T-cell (primary cell): ENCODE measurements at regions of chr5 and their contacts with region 1.

Region 1: GRCh38 chr5:59351076-59351794 is 542.3 kb downstream of the PDE4D start:
- DNase-seq: no peak
- ATAC-seq: no peak
- H3K4me3 ChIP-seq: no peak overlapping the region
- H3K4me3 Mint-ChIP-seq: no peak overlapping the region
- H3K27ac ChIP-seq: no peak overlapping the region
- H3K27ac Mint-ChIP-seq: no peak overlapping the region
- H3K4me1 ChIP-seq: no peaks in the 10 kb centered on the region
- H3K4me1 Mint-ChIP-seq: no peaks in the 10 kb centered on the region
- H3K27me3 ChIP-seq: no peaks in the 10 kb centered on the region
- H3K27me3 Mint-ChIP-seq: peaks cover 4 to 17% of the 10 kb centered on the region in 2 donors

Region 2: DNA sequence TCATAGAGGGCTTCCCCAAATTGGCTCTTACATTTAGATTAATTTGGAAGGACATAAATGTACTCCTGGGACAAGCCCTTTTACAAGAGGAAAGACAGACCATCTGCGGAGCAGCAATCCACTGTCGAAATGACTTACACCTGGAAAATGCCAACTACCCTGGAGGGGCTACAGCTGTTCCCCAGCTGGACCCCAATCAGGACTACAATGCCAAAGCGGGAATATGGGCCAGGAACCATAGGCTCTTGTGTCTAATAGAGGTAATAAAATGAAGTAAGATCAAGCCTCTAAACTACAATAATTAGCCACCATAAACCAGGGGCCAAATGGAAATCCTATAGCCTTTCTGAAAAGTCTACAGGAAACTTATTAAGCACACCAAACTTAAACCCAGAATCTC is 39.0 kb before region 1 on chr5:
- CTCF ChIA-PET with region 1: no interaction called
- POLR2A ChIA-PET with region 1: no interaction called
- DNase-seq: no peak
- ATAC-seq: no peak
- H3K4me3 ChIP-seq: no peak overlapping the region
- H3K4me3 Mint-ChIP-seq: no peak overlapping the region
- H3K27ac ChIP-seq: no peak overlapping the region
- H3K27ac Mint-ChIP-seq: no peak overlapping the region
- H3K4me1 ChIP-seq: no peaks in the 10 kb centered on the region
- H3K4me1 Mint-ChIP-seq: no peaks in the 10 kb centered on the region
- H3K27me3 ChIP-seq: no peaks in the 10 kb centered on the region
- H3K27me3 Mint-ChIP-seq: peaks cover 18 to 20% of the 10 kb centered on the region in 2 donors

Region 3: DNA sequence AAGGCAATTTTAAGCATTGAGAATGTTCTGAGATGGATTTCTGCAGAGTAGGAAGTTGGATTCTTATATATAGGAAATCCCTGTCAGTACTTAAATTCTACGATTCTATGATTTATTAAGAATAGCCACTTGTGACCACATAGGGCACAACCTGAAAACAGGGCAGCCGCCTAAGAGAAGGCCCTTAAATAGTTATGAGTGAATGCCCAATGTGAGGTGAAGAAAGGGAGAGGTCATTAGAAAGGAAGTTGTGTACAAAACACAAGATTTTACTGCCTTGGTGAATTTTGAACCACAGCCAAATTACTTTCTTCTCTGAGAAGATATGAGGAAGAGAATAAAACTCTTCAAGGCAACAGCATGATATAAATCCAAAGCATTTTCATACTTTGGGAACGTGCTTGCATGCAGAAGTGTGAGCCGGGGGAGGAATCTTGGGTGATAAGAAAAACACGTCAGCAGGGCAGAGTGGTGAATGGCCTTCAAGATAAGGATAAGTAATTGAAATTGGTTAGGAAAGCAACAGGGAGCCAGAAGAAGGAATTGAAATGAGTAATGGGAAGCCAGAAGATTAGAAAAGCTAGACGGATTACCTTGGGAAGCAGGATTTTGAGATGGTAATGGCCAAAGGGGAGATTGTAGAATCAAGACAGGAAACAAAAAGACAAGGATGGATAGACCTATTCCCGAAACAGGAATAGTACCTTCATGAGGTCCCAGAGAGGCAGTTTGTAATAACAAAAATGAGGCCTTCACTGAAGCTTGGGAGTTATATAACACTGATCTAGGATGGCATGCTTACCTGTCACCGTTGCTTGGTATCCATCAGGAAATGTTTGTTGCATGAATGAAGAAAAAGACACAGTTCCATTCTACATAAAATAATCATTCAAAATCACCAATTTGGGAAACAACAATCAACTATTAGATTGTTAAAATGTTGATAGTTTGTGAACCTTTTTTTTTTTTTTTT is 298.0 kb after region 1 on chr5:
- CTCF ChIA-PET with region 1: no interaction called
- POLR2A ChIA-PET with region 1: no interaction called
- DNase-seq: no peak
- ATAC-seq: no peak
- H3K4me3 ChIP-seq: no peak overlapping the region
- H3K4me3 Mint-ChIP-seq: no peak overlapping the region
- H3K27ac ChIP-seq: no peak overlapping the region
- H3K27ac Mint-ChIP-seq: no peak overlapping the region
- H3K4me1 ChIP-seq: no peaks in the 10 kb centered on the region
- H3K4me1 Mint-ChIP-seq: peaks cover 0 to 3% (median 3%) of the 10 kb centered on the region in 3 donors
- H3K27me3 ChIP-seq: no peaks in the 10 kb centered on the region
- H3K27me3 Mint-ChIP-seq: no peaks in the 10 kb centered on the region

Region 4: DNA sequence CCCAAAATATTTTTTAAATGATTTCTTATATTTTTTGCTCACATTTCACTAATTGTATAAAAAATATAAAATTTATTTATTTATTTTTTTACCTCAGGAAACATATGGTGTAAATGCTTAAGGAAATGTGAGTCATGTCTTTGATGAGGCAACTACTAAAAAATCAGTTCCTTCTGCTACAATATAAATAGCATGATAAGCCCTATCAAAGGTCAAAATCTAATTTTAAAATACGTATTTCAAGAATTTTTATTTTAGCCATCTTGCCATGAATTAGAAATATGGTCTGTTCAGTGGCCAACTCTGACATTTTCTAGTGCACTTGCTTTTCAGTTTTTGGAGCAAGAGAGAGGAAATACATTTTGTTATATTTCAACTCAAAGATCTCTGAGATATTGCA is 491.8 kb after region 1 on chr5:
- CTCF ChIA-PET with region 1: interaction called in 1 of 2 experiments, 10 read pairs
- POLR2A ChIA-PET with region 1: no interaction called
- DNase-seq: no peak
- ATAC-seq: no peak
- H3K4me3 ChIP-seq: no peak overlapping the region
- H3K4me3 Mint-ChIP-seq: no peak overlapping the region
- H3K27ac ChIP-seq: no peak overlapping the region
- H3K27ac Mint-ChIP-seq: no peak overlapping the region
- H3K4me1 ChIP-seq: no peaks in the 10 kb centered on the region
- H3K4me1 Mint-ChIP-seq: no peaks in the 10 kb centered on the region
- H3K27me3 ChIP-seq: no peaks in the 10 kb centered on the region
- H3K27me3 Mint-ChIP-seq: peaks cover 10 to 16% of the 10 kb centered on the region in 2 donors

Region 5: DNA sequence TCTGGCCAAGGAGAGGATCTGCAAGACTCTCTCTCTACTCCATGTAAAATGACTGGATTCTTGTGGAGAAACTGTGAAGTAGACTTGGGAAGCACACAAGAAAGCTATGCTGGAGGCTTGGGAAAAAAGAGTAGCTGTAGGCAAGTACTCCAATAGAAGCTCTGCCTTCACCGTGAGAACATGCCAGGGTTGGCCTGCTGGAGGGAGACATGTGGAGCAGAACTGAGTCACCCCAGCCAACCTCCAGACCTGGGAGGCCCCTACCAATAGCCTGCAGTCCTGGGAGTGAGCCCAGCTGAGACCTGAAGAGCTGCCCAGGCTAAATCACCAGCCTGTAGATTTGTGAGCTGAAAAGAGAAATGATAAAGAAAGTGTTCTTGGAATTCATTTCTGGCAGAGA is 1282.1 kb after region 1 on chr5:
- CTCF ChIA-PET with region 1: no interaction called
- POLR2A ChIA-PET with region 1: no interaction called
- DNase-seq: no peak
- ATAC-seq: no peak
- H3K4me3 ChIP-seq: no peak overlapping the region
- H3K4me3 Mint-ChIP-seq: no peak overlapping the region
- H3K27ac ChIP-seq: no peak overlapping the region
- H3K27ac Mint-ChIP-seq: no peak overlapping the region
- H3K4me1 ChIP-seq: no peaks in the 10 kb centered on the region
- H3K4me1 Mint-ChIP-seq: no peaks in the 10 kb centered on the region
- H3K27me3 ChIP-seq: peaks cover 0 to 3% of the 10 kb centered on the region in 2 experiments
- H3K27me3 Mint-ChIP-seq: no peaks in the 10 kb centered on the region